ENCODE measurements at regions of chr2 and their contacts with region 1.

Region 1: DNA sequence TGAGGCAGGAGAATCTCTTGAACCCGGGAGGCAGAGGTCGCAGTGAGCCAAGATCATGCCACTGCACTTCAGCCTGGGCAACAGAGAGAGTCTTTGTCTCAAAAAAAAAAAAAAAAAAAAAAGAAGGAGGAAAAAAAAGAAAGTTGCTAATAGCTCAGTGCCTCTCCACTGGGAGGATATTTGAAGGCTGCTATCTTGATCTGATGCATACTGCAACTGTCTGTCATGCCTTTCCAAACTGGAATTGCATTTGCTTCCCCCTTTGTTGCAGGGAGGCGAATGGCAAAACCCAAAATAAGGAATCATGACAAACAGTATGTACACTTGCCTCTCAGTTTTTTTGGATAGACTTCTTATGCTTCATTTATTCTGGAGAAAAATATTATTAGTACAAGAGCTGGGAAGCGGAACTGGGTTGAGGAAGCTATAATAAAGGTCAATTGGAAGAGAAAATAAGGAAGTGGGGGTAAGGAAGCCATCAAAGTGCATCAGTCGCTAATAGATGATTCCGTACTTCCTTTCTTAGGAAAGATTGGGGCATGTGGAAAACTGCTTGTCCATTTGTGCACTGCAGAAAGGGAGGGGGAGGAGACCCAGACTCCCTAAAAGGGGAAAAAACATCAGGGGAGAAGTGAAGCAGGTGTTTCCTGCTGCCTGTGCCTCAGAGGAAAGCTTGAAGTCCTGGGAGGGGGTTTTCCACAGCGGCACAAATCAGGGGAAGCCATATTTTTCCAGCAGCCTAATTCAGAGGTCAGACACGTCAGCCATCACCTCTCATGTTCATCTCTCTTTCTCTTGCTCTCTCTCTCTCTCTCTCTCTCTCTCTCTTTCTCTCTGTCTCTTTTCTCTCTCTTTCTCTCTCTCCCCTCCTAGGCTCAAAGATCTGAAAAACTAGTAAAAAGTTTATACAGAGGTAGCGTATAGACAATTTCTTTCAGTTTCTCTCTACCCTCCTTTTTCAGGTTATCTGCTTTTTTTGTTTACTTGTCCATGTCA is 301.4 kb upstream of the TNP1 start:
- DNase-seq: no peak
- ATAC-seq: no peak
- H3K4me3 Mint-ChIP-seq: no peak overlapping the region
- H3K27ac Mint-ChIP-seq: no peak overlapping the region
- H3K4me1 Mint-ChIP-seq: no peaks in the 10 kb centered on the region
- H3K27me3 Mint-ChIP-seq: no peaks in the 10 kb centered on the region; the same call in 1 of the 2 replicates
- CTCF ChIP-seq: no peak

Region 2: GRCh38 chr2:216918088-216918680 is 243.1 kb before region 1 on chr2:
- CTCF ChIA-PET with region 1: no interaction called
- POLR2A ChIA-PET with region 1: no interaction called
- DNase-seq: no peak
- ATAC-seq: no peak
- H3K4me3 Mint-ChIP-seq: no peak overlapping the region
- H3K27ac Mint-ChIP-seq: no peak overlapping the region
- H3K4me1 Mint-ChIP-seq: peaks cover 14% of the 10 kb centered on the region
- H3K27me3 Mint-ChIP-seq: no peaks in the 10 kb centered on the region
- CTCF ChIP-seq: no peak

Region 3: GRCh38 chr2:217262911-217263310 is 101.6 kb after region 1 on chr2:
- CTCF ChIA-PET with region 1: no interaction called
- POLR2A ChIA-PET with region 1: no interaction called
- DNase-seq: no peak
- ATAC-seq: no peak
- H3K4me3 Mint-ChIP-seq: no peak overlapping the region
- H3K27ac Mint-ChIP-seq: no peak overlapping the region
- H3K4me1 Mint-ChIP-seq: peaks cover 3% of the 10 kb centered on the region; the same call in 1 of the 2 replicates
- H3K27me3 Mint-ChIP-seq: peaks cover 100% of the 10 kb centered on the region
- CTCF ChIP-seq: no peak

Region 4: DNA sequence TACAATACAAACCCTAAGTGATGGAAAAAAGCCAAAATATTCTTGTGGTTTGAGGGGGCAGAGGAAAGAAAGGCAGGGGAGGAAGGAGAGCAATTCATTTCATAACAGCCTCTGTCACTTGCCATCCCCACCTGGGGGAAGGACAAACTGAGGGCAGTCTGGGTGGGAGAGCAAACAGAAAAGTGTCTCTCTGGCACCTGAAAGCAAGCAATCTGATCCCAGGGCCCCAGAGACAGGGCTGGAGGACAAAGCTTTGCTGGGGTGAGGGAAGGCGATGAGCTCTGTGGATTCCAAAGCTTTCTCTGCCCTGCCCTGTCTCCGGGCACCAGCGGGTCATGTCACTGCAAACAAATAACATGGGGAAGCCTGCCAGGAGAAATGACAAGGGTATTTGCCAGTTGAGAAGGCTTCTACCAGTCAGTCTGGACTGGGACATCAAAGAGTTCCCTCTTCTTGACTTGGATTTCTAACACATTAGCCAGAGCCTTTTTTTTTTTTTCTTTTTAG is 226.7 kb after region 1 on chr2:
- CTCF ChIA-PET with region 1: no interaction called
- POLR2A ChIA-PET with region 1: no interaction called
- DNase-seq: no peak
- ATAC-seq: no peak
- H3K4me3 Mint-ChIP-seq: no peak overlapping the region
- H3K27ac Mint-ChIP-seq: no peak overlapping the region
- H3K4me1 Mint-ChIP-seq: no peaks in the 10 kb centered on the region
- H3K27me3 Mint-ChIP-seq: peaks cover 9% of the 10 kb centered on the region
- CTCF ChIP-seq: no peak

Region 5: DNA sequence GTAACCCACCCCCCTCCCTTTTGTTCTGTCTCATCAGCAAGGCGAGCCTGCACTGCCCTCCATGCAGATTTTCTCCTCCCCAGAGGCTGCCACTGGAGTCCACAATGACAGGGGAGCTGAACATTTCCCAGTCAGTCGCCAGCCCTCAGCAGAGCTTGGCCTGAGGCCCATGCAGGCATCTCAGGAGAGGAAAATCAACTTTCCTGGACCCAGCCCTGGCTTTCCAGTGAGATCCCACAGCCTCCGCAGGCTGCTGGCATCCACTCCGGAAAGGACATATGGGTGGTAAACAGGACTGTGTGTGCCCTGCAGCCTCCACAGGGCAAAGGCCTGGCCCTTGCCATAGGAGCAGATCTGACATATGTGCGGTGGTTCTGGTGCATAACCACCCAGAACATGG is 587.7 kb after region 1 on chr2:
- CTCF ChIA-PET with region 1: interaction called, 3 read pairs
- POLR2A ChIA-PET with region 1: interaction called, 10 read pairs
- DNase-seq: no peak
- ATAC-seq: no peak
- H3K4me3 Mint-ChIP-seq: no peak overlapping the region
- H3K27ac Mint-ChIP-seq: no peak overlapping the region
- H3K4me1 Mint-ChIP-seq: peaks cover 9% of the 10 kb centered on the region
- H3K27me3 Mint-ChIP-seq: peaks cover 5% of the 10 kb centered on the region
- CTCF ChIP-seq: no peak

Measured in WTC11 (cell line).